ENCODE measurements at regions of chr2 and their contacts with region 1.

Region 1: DNA sequence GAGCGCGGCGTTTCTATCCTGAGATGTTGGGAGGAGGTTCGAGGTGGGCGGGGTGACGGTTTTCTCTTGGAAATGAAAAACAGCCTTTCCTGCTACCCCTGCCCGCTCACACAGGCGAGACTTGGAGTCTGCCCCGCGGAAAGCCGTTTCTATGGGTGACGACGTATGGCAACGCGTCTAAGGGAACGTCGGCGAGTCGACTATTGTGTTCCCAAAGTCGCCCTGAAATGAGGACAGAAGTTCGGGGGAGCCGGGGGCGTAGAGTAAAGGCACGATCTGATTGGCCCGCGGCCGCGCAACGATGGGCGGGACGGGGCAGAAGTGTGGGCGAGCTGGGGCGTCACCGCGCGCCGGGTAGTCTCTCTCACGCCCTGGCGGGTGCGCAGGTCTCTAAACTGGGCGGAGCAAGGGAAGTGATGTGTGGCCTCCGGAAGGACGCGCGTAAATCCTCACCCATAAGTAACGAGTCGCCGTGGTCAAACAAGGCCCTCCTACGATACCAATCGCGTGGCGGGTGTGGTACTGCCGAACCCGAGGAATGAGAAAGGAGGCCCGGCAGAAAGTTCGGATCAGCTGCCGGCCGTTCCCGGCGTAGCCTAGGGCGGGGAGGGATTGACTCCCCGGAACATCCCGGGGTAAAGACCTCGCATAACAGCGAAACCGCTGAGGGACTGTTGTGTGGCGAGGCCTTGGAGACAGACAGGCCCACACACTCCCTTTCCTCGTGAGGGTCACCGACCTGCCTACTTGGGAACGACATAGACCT is 89.6 kb downstream of the FAM161A start:
- DNase-seq: peak; percentile 96 to 97
- H3K4me3 ChIP-seq: peak overlapping the region; percentile 69 to 83
- H3K27ac ChIP-seq: peak overlapping the region; percentile 97
- H3K4me1 ChIP-seq: peaks cover 9% of the 10 kb centered on the region
- H3K27me3 ChIP-seq: no peaks in the 10 kb centered on the region
- CTCF ChIP-seq: no peak
- POLR2A ChIP-seq: peak in 1 of 2 donors; percentile 86

Region 2: GRCh38 chr2:61470965-61471904 is 293.0 kb before region 1 on chr2 and contains the start of gene USP34:
- intact Hi-C with region 1: loop called (anchors 10 kb)
- DNase-seq: peak in 1 of 2 donors; percentile 93
- H3K4me3 ChIP-seq: peak within 1 kb of the TSS; percentile 88 to 96
- H3K27ac ChIP-seq: peak within 1 kb of the TSS; percentile 99
- H3K4me1 ChIP-seq: peaks cover 30% of the 10 kb centered on the region
- H3K27me3 ChIP-seq: no peaks in the 10 kb centered on the region
- CTCF ChIP-seq: no peak
- POLR2A ChIP-seq: peak in 1 of 2 donors; percentile 77
- total RNA-seq, gene USP34: 117 TPM

Region 3: GRCh38 chr2:62055724-62056336 is 291.6 kb after region 1 on chr2:
- intact Hi-C with region 1: no loop called
- DNase-seq: no peak
- H3K4me3 ChIP-seq: no peak overlapping the region
- H3K27ac ChIP-seq: no peak overlapping the region
- H3K4me1 ChIP-seq: peaks cover 2% of the 10 kb centered on the region
- H3K27me3 ChIP-seq: no peaks in the 10 kb centered on the region
- CTCF ChIP-seq: no peak
- POLR2A ChIP-seq: no peak

Measured in vagina (tissue), 2 donors.